Body of pancreas (tissue), 4 donors: ENCODE measurements at regions of chr17 and their contacts with region 1.

Region 1: DNA sequence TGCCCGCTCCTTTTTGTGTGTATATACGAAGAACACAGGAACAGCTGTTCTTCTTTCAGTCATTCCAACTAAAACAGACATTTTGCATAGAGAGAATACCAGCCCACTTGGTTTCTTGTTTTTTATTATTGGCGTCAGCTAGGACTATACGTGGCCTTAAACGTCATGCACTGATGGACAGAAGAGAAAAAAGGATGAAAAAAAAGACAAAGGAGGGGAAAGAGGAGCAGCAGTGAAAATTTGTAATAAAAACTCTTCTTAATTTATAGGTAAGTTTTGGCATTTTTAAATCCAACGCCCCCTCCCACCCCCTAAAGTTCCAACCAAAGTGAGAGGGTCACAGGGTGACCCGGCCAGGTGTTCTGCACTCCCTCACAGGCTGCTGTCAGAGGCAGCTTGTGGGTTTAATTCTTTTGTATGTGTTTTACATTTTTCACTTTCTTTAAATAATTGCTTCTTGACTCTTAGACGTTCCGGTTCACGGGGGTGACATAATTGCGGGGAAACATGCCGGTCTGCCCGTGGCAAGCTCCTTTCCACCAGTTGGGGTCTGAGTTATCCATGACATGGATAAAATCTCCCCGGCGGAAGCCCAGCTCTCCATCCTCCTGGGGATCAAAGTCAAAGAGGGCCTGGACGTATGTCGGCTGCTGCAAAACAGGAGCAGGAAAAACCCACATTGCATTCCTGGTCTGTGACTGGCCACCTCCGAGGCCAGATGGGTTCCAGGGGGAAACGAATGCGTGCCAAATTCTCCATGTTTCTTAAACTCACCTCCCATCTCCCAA is 30.9 kb upstream of the SLC25A19 start:
- DNase-seq: no peak
- ATAC-seq: no peak
- H3K4me3 ChIP-seq: no peak overlapping the region
- H3K27ac ChIP-seq: no peak overlapping the region
- H3K4me1 ChIP-seq: peaks cover 4% of the 10 kb centered on the region
- H3K27me3 ChIP-seq: no peaks in the 10 kb centered on the region
- CTCF ChIP-seq: no peak
- POLR2A ChIP-seq: no peak

Region 2: GRCh38 chr17:75398279-75398678 is 78.2 kb after region 1 on chr17:
- intact Hi-C with region 1: loop called (anchors 5 kb)
- DNase-seq: no peak
- ATAC-seq: no peak
- H3K4me3 ChIP-seq: no peak overlapping the region
- H3K27ac ChIP-seq: no peak overlapping the region
- H3K4me1 ChIP-seq: peaks cover 24% of the 10 kb centered on the region
- H3K27me3 ChIP-seq: no peaks in the 10 kb centered on the region
- CTCF ChIP-seq: no peak
- POLR2A ChIP-seq: no peak

Region 3: DNA sequence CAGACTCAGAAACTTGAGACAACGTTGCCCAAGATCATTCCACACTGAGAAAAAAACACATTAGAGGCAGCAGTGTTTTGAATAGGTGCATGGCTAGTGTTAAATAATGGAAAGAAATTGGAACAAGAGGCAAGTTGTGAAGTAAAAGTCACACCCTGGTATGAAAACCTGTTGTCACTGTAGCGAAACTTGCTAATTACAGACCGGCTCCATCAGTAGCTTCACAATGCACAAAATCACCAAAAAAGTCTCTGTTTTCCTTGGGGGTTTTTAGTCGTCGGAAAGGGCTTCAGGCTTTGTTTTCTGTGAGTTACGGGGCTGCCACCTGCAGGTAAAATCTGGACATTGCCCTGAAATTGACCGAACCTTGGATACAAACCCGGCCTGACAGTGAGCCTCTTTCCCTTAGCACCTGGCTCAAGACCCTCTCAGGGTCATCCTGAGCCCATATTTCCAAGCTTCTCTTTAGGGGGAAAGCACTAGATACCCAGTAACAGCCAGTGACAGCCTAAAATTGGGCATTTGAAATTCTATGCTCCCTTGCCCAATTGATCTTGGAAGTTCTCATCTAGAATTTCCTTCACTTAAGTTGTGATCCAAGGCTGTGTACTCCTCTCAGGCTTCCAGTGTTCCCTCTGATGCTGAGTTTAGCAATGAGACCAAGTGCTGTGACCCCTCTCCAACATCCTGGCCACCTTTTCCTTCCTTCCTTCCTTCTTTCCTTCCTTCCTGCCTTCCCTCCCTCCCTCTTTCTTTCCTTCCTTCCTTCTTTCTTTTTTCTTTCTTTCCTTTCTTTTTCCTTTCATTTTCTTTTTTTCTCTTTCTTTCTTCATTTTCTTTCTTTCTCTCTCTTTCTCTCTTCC is 92.6 kb after region 1 on chr17:
- intact Hi-C with region 1: loop called (anchors 5 kb)
- DNase-seq: peak; percentile 60 to 80 (median 72)
- ATAC-seq: peak; percentile 81
- H3K4me3 ChIP-seq: no peak overlapping the region
- H3K27ac ChIP-seq: no peak overlapping the region
- H3K4me1 ChIP-seq: peaks cover 7% of the 10 kb centered on the region
- H3K27me3 ChIP-seq: no peaks in the 10 kb centered on the region
- CTCF ChIP-seq: peak; percentile 72 to 92 (median 79)
- POLR2A ChIP-seq: no peak